H1 (cell line): ENCODE measurements at regions of chr20 and their contacts with region 1.

Region 1: DNA sequence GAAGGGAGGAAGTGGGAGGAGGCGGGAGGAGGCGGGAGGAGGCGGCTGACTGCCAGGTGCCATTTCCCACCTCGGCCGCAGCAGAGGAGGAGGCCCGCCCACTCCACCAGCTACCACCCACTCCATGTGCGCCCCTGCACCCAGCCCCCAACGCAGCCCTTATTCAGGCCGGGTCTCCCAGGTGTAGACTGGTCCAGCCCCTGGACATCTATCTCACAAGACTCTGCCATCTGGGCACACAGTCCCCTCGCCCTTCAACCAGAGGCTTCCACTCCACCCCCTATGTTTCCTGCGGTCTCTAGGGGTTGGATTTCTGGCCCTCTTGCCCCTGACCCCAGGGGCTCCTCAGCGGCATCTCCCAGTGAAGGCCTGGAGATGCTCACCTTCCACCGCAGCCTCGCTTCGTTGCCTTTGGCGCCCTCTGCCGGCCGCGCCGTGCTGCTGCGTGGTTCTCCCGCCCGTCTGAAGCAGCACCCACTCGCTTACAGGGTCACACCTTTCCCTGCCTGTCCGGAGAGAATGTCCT is 32.6 kb upstream of the FAM83D start:
- DNase-seq: peak; percentile 41 to 89
- H3K4me3 ChIP-seq: peak overlapping the region in 1 of 4 experiments; percentile 41; a peak in 2 of 8 replicates
- H3K27ac ChIP-seq: no peak overlapping the region
- H3K4me1 ChIP-seq: peaks cover 3 to 10% (median 4%) of the 10 kb centered on the region in 4 experiments; a peak in 4 of 7 replicates
- H3K27me3 ChIP-seq: no peaks in the 10 kb centered on the region; a peak in 1 of 7 replicates
- CTCF ChIP-seq: peak; percentile 88 to 99 (median 98)
- EP300 ChIP-seq: no peak
- POLR2A ChIP-seq: no peak
- RAD21 ChIP-seq: peak; percentile 89 to 90

Region 2: GRCh38 chr20:38779247-38780097 is 114.2 kb before region 1 on chr20:
- CTCF ChIA-PET with region 1: interaction called, 20 read pairs
- POLR2A ChIA-PET with region 1: interaction called, 3 read pairs
- DNase-seq: peak in 1 of 2 experiments; percentile 70
- H3K4me3 ChIP-seq: peak overlapping the region in 2 of 4 experiments; percentile 33 to 46; a peak in 5 of 8 replicates
- H3K27ac ChIP-seq: peak overlapping the region; percentile 12; the same call in 1 of the 2 replicates
- H3K4me1 ChIP-seq: peaks cover 3 to 8% (median 7%) of the 10 kb centered on the region in 4 experiments; a peak in 5 of 7 replicates
- H3K27me3 ChIP-seq: no peaks in the 10 kb centered on the region
- CTCF ChIP-seq: no peak
- EP300 ChIP-seq: no peak
- POLR2A ChIP-seq: peak in 1 of 2 experiments; percentile 59; a peak in 2 of 3 replicates
- RAD21 ChIP-seq: no peak

Region 3: GRCh38 chr20:38805502-38805957 is 88.1 kb before region 1 on chr20 and contains the start of gene PPP1R16B:
- CTCF ChIA-PET with region 1: interaction called, 18 read pairs
- POLR2A ChIA-PET with region 1: interaction called, 4 read pairs
- DNase-seq: peak in 1 of 2 experiments; percentile 87
- H3K4me3 ChIP-seq: peak within 1 kb of the TSS; percentile 62 to 87 (median 63)
- H3K27ac ChIP-seq: no peak within 1 kb of the TSS
- H3K4me1 ChIP-seq: peaks cover 13 to 18% (median 15%) of the 10 kb centered on the region in 4 experiments
- H3K27me3 ChIP-seq: peaks cover 4 to 25% (median 17%) of the 10 kb centered on the region in 4 experiments; a peak in 6 of 7 replicates
- CTCF ChIP-seq: no peak
- EP300 ChIP-seq: no peak
- POLR2A ChIP-seq: peak in 1 of 2 experiments; percentile 73; a peak in 1 of 3 replicates
- RAD21 ChIP-seq: no peak
- total RNA-seq, gene PPP1R16B: 8.9 and 9.7 TPM in 2 replicates

Region 4: DNA sequence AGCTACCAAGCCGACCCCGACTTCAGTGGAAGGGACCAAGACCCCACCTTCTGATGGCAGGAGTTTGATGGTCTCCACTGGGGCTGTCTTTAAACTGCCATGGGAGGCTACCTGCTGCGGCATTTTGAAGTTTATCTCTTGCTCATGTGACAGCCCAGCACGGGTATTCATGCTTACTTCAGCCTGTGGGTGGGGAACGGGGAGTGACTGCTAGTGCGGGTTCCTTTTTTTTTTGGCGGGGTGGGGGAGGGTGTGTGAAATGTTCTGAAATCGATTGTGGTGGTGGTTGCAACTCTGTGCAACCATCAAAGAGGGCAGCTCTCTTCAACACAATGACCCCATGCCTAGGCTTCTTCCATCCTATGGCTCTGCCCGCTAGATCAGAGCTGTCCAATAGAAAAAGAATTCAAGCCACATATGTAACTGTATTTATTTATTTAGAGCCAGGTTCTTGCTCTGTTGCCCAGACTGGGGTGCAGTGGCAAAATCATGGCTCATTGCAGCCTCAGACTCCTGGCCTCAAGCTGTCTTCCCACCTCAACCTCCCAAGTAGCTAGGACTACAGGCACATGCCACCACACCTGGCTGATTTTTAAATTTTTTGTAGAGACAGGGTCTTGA is 34.4 kb before region 1 on chr20:
- CTCF ChIA-PET with region 1: interaction called, 55 read pairs
- POLR2A ChIA-PET with region 1: no interaction called
- DNase-seq: no peak
- H3K4me3 ChIP-seq: no peak overlapping the region
- H3K27ac ChIP-seq: no peak overlapping the region
- H3K4me1 ChIP-seq: peaks cover 0 to 3% (median under 1%) of the 10 kb centered on the region in 4 experiments; a peak in 3 of 7 replicates
- H3K27me3 ChIP-seq: no peaks in the 10 kb centered on the region
- CTCF ChIP-seq: no peak
- EP300 ChIP-seq: no peak
- POLR2A ChIP-seq: no peak
- RAD21 ChIP-seq: no peak

Region 5: GRCh38 chr20:38866265-38867061 is 27.2 kb before region 1 on chr20:
- CTCF ChIA-PET with region 1: interaction called, 55 read pairs
- POLR2A ChIA-PET with region 1: no interaction called
- DNase-seq: no peak
- H3K4me3 ChIP-seq: no peak overlapping the region
- H3K27ac ChIP-seq: no peak overlapping the region
- H3K4me1 ChIP-seq: peaks cover 0 to 7% (median 4%) of the 10 kb centered on the region in 4 experiments; a peak in 5 of 7 replicates
- H3K27me3 ChIP-seq: no peaks in the 10 kb centered on the region
- CTCF ChIP-seq: no peak
- EP300 ChIP-seq: no peak
- POLR2A ChIP-seq: no peak
- RAD21 ChIP-seq: no peak

Region 6: DNA sequence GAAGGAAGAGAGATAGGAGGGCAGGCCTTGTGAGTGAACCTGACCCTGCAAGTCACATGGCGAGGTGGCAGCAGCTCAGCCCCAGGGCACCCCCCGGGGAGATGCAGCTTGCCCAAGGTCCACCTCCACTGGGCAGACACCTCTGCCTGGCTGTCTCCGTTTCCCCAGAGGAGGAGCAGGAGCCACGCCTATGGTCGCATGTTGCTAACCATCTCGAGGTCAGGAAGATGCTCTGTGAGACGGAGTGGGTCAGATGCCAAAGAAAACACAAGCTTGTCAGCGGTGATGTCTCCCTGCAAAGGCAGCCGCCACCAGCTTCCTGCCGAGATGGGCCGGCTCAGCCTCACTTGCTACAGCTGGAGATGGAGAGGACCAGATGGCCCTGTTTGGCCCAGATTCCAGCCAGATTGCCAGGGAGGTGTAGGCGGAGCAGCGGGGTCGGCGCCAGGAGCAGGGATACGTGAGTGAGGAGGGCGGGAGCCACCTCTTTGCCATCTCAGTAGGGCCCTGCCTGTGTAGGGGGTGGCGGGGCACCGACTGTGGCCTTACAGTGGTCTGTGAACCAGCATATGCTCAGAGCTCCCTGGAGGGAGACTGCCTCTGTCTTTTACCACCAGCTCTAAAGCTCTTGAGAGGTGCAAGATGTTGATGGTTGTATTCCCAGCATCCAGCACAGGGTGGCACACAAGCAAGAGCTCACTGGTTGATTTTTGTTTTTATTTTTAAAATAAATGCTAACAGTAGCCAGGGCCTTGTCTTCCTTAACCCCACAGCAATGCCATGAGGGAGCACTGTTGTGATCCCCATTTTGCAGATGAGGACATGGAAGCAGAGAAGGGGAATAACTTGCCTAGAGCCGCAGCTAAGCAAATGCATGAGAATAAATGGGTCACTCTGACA is 10.3 kb before region 1 on chr20:
- CTCF ChIA-PET with region 1: interaction called, 79 read pairs
- POLR2A ChIA-PET with region 1: interaction called, 6 read pairs
- DNase-seq: no peak
- H3K4me3 ChIP-seq: no peak overlapping the region
- H3K27ac ChIP-seq: no peak overlapping the region
- H3K4me1 ChIP-seq: peaks cover 0 to 7% (median 2%) of the 10 kb centered on the region in 4 experiments; a peak in 5 of 7 replicates
- H3K27me3 ChIP-seq: no peaks in the 10 kb centered on the region
- CTCF ChIP-seq: no peak
- EP300 ChIP-seq: no peak
- POLR2A ChIP-seq: no peak
- RAD21 ChIP-seq: no peak